B cell (primary cell): ENCODE measurements at regions of chr3 and their contacts with region 1.

Region 1: GRCh38 chr3:36944012-36944640 is 728 bp downstream of the TRANK1 start:
- DNase-seq: no peak
- ATAC-seq: peak; percentile 39
- H3K4me3 ChIP-seq: peak overlapping the region; percentile 22 to 79 (median 76)
- H3K4me3 Mint-ChIP-seq: peak overlapping the region; percentile 90
- H3K27ac ChIP-seq: peak overlapping the region in 1 of 2 donors; percentile 76
- H3K27ac Mint-ChIP-seq: peak overlapping the region; percentile 78
- H3K4me1 ChIP-seq: peaks cover 6 to 14% of the 10 kb centered on the region in 2 donors
- H3K4me1 Mint-ChIP-seq: peaks cover 16% of the 10 kb centered on the region
- H3K27me3 ChIP-seq: no peaks in the 10 kb centered on the region
- H3K27me3 Mint-ChIP-seq: no peaks in the 10 kb centered on the region
- CTCF ChIP-seq: no peak

Region 2: DNA sequence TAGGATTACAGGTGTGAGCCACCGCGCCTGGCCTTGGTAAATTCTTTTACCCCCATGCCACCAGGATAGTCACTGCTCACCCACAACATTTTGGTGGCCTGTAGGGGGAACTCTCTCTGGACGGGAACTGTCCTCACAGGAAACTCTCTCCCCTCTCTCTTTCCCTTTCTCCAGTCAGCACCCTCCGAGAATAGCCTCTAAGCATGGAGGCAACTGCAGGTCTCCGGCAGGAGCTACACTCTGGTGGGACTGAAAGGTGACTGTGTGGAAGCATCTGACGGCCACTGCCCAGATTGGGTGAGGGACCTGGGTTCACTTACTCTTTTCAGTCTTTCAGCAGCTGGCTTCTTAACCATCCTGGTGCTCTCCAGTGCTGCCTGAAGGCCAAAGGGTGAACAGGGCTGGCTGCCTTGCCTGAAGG is 20.6 kb before region 1 on chr3:
- CTCF ChIA-PET with region 1: interaction called, 4 read pairs
- POLR2A ChIA-PET with region 1: interaction called, 5 read pairs
- intact Hi-C with region 1: loop called (anchors 2 kb)
- DNase-seq: peak; percentile 55
- ATAC-seq: no peak
- H3K4me3 ChIP-seq: peak overlapping the region in 3 of 5 experiments; percentile 1 to 24 (median 12)
- H3K4me3 Mint-ChIP-seq: peak overlapping the region; percentile 80
- H3K27ac ChIP-seq: peak overlapping the region; percentile 2 to 60
- H3K27ac Mint-ChIP-seq: peak overlapping the region; percentile 83
- H3K4me1 ChIP-seq: peaks cover 39 to 50% of the 10 kb centered on the region in 2 donors
- H3K4me1 Mint-ChIP-seq: peaks cover 49% of the 10 kb centered on the region
- H3K27me3 ChIP-seq: no peaks in the 10 kb centered on the region
- H3K27me3 Mint-ChIP-seq: no peaks in the 10 kb centered on the region
- CTCF ChIP-seq: no peak

Region 3: GRCh38 chr3:36993326-36994283 is 49.5 kb after region 1 on chr3 and contains the start of gene MLH1:
- CTCF ChIA-PET with region 1: no interaction called
- POLR2A ChIA-PET with region 1: interaction called, 12 read pairs
- intact Hi-C with region 1: loop called (anchors 1 kb)
- DNase-seq: peak; percentile 100
- ATAC-seq: peak; percentile 85
- H3K4me3 ChIP-seq: peak within 1 kb of the TSS; percentile 72 to 86 (median 76)
- H3K4me3 Mint-ChIP-seq: no peak within 1 kb of the TSS
- H3K27ac ChIP-seq: peak within 1 kb of the TSS; percentile 97 to 98
- H3K27ac Mint-ChIP-seq: no peak within 1 kb of the TSS
- H3K4me1 ChIP-seq: peaks cover 39 to 46% of the 10 kb centered on the region in 2 donors
- H3K4me1 Mint-ChIP-seq: peaks cover 38% of the 10 kb centered on the region
- H3K27me3 ChIP-seq: no peaks in the 10 kb centered on the region
- H3K27me3 Mint-ChIP-seq: no peaks in the 10 kb centered on the region
- CTCF ChIP-seq: no peak
- total RNA-seq, gene MLH1: 38.5 and 46.3 TPM in 2 replicates